ENCODE measurements at regions of chr14 and their contacts with region 1.

Region 1: DNA sequence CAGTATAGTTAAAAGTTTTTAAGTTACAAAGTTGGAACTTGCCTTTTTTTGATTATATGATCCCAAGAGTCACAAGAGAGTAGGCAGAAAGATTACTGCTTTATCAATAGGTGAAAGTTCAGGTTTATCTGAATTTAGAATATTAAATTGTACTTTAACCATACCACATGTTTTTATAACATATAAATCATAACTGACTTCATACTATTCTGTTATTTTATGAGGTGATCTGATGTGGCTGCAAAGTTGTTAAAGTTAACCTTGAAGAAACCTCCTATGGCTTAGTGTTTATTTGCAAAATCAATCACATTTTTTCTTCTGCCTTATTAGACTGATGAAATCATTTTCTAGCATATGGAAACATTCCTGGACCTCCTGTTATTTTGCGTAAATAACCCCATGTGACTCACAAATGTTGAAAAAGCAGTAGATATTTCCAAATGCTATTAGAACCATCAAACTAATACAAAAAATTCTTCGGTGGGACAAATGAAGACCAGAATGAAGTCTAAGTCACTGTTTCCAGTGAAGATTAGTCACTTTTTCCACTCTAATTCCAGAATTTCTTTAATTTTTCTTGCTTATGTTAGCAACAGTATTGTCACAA is 132.1 kb downstream of the RAD51B start:
- DNase-seq: no peak
- ATAC-seq: no peak
- H3K4me3 ChIP-seq: no peak overlapping the region
- H3K27ac ChIP-seq: no peak overlapping the region
- H3K4me1 ChIP-seq: no peaks in the 10 kb centered on the region
- H3K27me3 ChIP-seq: no peaks in the 10 kb centered on the region
- CTCF ChIP-seq: no peak

Region 2: DNA sequence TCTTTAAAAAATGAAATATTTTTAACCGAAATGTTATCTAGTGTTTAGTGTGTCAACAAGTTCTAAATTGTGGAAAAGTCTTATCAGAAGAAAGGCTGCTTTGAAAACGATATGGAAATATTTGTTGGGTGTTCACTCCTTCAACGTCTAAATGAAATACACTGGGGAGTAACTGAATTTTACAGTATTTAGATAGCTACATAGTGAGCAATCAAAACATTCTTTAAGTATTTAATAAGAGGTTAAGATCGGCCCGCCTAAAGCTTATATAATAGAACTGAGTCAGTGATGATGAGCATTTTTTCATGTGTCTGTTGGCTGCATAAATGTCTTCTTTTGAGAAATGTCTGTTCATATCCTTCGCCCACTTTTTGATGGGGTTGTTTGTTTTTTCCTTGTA is 96.3 kb after region 1 on chr14:
- intact Hi-C with region 1: no loop called
- DNase-seq: no peak
- ATAC-seq: no peak
- H3K4me3 ChIP-seq: no peak overlapping the region
- H3K27ac ChIP-seq: no peak overlapping the region
- H3K4me1 ChIP-seq: no peaks in the 10 kb centered on the region
- H3K27me3 ChIP-seq: no peaks in the 10 kb centered on the region
- CTCF ChIP-seq: no peak

Region 3: GRCh38 chr14:68248481-68249255 is 297.0 kb after region 1 on chr14:
- intact Hi-C with region 1: loop called in 1 of 2 experiments (anchors 10 kb)
- DNase-seq: peak; percentile 38 to 87 (median 64)
- ATAC-seq: peak; percentile 78
- H3K4me3 ChIP-seq: no peak overlapping the region
- H3K27ac ChIP-seq: peak overlapping the region; percentile 68 to 87
- H3K4me1 ChIP-seq: peaks cover 44 to 66% of the 10 kb centered on the region in 2 donors
- H3K27me3 ChIP-seq: no peaks in the 10 kb centered on the region
- CTCF ChIP-seq: peak in 1 of 2 donors; percentile 42